CD4-positive, alpha-beta T cell (primary cell): ENCODE measurements at regions of chr4 and their contacts with region 1.

Region 1: DNA sequence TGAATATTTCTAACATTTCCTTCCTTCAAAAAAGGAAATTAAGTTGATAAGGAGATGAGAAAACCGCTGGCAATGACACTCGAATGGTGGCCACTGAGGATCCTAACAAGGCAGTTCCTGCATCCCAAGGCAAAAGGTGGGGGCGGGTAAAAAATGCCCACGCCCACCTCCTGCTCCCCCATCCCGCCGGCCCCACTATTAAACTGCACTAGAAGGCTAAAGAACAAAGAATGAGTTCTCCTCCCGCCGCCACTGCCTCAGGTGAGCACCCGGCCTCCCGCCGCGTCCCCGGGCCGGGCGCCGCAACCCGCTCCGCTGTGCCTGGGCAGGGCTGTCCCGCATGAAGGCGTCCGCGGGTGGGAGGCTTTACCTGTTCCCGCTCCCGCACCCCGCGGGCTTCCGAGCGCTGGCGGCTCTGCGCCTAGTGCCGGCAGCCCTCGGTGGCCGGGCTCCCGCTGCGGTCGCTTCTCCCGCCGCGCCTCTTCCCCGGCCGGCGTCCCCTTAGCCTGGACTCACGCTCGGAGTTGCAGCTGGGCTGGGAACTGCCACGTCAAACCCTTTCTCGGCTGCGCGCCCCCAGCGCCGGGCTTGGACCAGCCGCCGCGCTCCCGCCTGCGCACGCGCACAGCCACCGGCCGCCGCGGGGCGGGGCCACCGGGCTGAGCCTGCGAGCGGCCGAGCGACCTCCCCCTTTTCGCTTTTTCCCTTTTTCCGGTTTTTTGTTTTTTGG is at the start of gene SEC24D:
- DNase-seq: peak; percentile 61 to 92 (median 76)
- ATAC-seq: peak; percentile 80
- H3K4me3 ChIP-seq: peak within 1 kb of the TSS; percentile 92
- H3K4me3 Mint-ChIP-seq: peak within 1 kb of the TSS; percentile 100
- H3K27ac ChIP-seq: peak within 1 kb of the TSS; percentile 72 to 91
- H3K27ac Mint-ChIP-seq: peak within 1 kb of the TSS; percentile 88
- H3K4me1 ChIP-seq: peaks cover 18% of the 10 kb centered on the region
- H3K4me1 Mint-ChIP-seq: peaks cover 24% of the 10 kb centered on the region
- H3K27me3 ChIP-seq: no peaks in the 10 kb centered on the region
- H3K27me3 Mint-ChIP-seq: no peaks in the 10 kb centered on the region
- CTCF ChIP-seq: no peak
- total RNA-seq, gene SEC24D: 13.9 to 14.8 TPM

Region 2: DNA sequence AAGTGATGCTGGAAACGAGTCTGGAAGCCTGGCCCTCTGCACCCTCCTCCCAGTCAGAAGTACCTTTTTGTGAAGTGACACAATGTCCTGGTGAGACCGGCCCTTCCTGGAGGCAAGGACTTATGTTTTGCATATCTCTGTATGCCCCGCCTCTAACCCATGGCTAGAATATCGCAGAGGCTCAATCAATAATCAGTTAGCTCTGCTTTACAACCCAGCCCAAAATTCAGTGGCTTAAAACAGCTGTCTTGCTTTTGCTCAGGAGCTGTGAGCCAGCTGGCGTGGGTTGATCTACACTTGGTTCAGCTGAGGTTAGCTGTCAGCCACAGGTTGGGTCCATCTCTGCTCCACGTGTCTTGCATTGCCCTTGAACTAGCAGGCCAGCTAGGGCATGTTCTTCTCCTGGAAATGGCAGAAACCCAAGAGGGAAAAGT is 249.4 kb before region 1 on chr4:
- CTCF ChIA-PET with region 1: no interaction called
- POLR2A ChIA-PET with region 1: no interaction called
- intact Hi-C with region 1: loop called in 1 of 2 experiments (anchors 10 kb)
- DNase-seq: no peak
- ATAC-seq: no peak
- H3K4me3 ChIP-seq: no peak overlapping the region
- H3K4me3 Mint-ChIP-seq: no peak overlapping the region
- H3K27ac ChIP-seq: no peak overlapping the region
- H3K27ac Mint-ChIP-seq: no peak overlapping the region
- H3K4me1 ChIP-seq: no peaks in the 10 kb centered on the region
- H3K4me1 Mint-ChIP-seq: peaks cover 10% of the 10 kb centered on the region
- H3K27me3 ChIP-seq: peaks cover 4 to 29% of the 10 kb centered on the region in 2 experiments
- H3K27me3 Mint-ChIP-seq: peaks cover 54% of the 10 kb centered on the region
- CTCF ChIP-seq: no peak

Region 3: DNA sequence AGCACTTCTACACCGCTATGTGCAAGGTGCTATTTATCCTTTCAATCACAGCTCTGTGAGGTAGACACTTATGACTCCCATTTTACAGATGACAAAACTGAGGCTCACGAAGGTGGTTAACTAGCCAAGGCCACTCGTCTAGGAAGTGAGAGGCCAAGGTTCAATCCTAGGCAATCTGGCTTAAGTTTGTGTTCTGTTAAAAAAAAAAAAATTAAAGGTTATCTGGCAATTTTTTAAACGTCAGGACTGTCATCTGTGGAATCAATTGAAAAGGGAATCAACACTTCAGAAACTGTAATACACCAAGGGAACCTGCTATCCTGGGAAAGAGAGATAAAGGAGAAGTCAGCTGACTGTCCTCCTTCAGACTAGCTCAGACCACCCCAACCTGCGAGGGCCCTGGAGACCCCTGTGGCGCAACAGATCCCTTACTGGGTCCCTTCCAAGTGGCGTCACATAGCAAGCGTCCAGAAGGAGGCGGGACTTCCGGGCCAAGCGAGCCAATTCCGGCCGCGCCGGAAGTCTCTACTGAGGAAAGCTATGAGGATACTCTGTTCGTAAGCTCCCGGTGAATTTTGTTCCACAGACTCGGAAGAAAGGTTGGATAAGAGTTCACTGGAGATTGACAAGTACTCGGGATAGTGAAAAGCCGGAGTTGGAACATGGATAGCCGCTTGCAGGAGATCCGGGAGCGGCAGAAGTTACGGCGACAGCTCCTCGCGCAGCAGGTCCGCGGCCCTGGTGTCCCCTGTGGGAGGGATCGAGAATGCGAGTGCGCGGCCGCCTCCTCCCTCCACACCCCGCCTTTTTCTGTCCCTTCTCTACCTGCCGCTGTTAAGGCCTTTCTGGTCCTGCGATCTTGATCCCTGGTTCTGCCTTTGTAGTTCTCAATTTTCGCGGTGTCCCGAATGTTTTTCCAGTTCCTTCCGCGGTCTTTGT is 150.6 kb before region 1 on chr4 and contains the start of gene METTL14:
- CTCF ChIA-PET with region 1: no interaction called
- POLR2A ChIA-PET with region 1: no interaction called
- intact Hi-C with region 1: loop called in 1 of 2 experiments (anchors 5 kb)
- DNase-seq: peak; percentile 71 to 91 (median 78)
- ATAC-seq: peak; percentile 90
- H3K4me3 ChIP-seq: peak within 1 kb of the TSS; percentile 73
- H3K4me3 Mint-ChIP-seq: peak within 1 kb of the TSS; percentile 93
- H3K27ac ChIP-seq: peak within 1 kb of the TSS; percentile 60 to 85
- H3K27ac Mint-ChIP-seq: peak within 1 kb of the TSS; percentile 89
- H3K4me1 ChIP-seq: no peaks in the 10 kb centered on the region
- H3K4me1 Mint-ChIP-seq: peaks cover 33% of the 10 kb centered on the region
- H3K27me3 ChIP-seq: no peaks in the 10 kb centered on the region
- H3K27me3 Mint-ChIP-seq: no peaks in the 10 kb centered on the region
- CTCF ChIP-seq: no peak
- total RNA-seq, gene METTL14: 45.1 to 46.5 TPM

Region 4: GRCh38 chr4:118850488-118851173 is 14.9 kb after region 1 on chr4:
- CTCF ChIA-PET with region 1: interaction called, 3 read pairs
- POLR2A ChIA-PET with region 1: interaction called, 14 read pairs
- intact Hi-C with region 1: loop called (anchors 1 kb)
- DNase-seq: peak in 10 of 14 experiments; percentile 5 to 81 (median 32)
- ATAC-seq: peak; percentile 94
- H3K4me3 ChIP-seq: peak overlapping the region; percentile 60
- H3K4me3 Mint-ChIP-seq: peak overlapping the region; percentile 93
- H3K27ac ChIP-seq: peak overlapping the region; percentile 21 to 56
- H3K27ac Mint-ChIP-seq: peak overlapping the region; percentile 89
- H3K4me1 ChIP-seq: peaks cover 10% of the 10 kb centered on the region
- H3K4me1 Mint-ChIP-seq: peaks cover 39% of the 10 kb centered on the region
- H3K27me3 ChIP-seq: no peaks in the 10 kb centered on the region
- H3K27me3 Mint-ChIP-seq: peaks cover 3% of the 10 kb centered on the region
- CTCF ChIP-seq: no peak

Region 5: DNA sequence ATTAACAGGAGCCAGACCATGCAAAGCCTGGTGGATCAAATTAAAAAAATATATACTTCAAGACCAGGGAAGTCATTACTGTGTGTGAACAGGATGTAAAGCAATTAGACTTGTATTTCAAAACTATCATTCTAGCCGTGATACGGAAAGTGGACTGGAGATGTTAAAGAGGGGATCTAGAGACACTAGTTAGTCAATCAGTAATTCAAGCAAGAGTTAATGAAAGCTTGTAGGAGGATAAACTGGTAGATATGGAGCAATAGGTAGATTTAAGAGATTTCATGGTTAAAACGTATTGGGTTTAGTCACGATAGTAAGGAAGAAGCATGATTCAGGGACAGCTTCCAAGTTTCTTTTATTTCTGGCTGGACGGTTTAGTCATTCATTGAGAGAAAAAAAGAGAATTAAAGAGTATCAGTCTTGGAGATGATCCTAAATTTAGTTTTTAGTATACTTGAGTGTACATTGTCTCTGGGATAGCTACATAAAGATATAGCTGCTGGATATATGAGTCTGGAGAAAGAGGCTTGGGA is 1227.0 kb after region 1 on chr4:
- CTCF ChIA-PET with region 1: no interaction called
- POLR2A ChIA-PET with region 1: no interaction called
- intact Hi-C with region 1: loop called in 1 of 2 experiments (anchors 5 kb)
- DNase-seq: no peak
- ATAC-seq: no peak
- H3K4me3 ChIP-seq: no peak overlapping the region
- H3K4me3 Mint-ChIP-seq: peak overlapping the region; percentile 20
- H3K27ac ChIP-seq: no peak overlapping the region
- H3K27ac Mint-ChIP-seq: peak overlapping the region; percentile 58
- H3K4me1 ChIP-seq: peaks cover 7% of the 10 kb centered on the region
- H3K4me1 Mint-ChIP-seq: peaks cover 50% of the 10 kb centered on the region
- H3K27me3 ChIP-seq: no peaks in the 10 kb centered on the region
- H3K27me3 Mint-ChIP-seq: no peaks in the 10 kb centered on the region
- CTCF ChIP-seq: no peak